T-cell (primary cell): ENCODE measurements at regions of chr22 and their contacts with region 1.

Region 1: DNA sequence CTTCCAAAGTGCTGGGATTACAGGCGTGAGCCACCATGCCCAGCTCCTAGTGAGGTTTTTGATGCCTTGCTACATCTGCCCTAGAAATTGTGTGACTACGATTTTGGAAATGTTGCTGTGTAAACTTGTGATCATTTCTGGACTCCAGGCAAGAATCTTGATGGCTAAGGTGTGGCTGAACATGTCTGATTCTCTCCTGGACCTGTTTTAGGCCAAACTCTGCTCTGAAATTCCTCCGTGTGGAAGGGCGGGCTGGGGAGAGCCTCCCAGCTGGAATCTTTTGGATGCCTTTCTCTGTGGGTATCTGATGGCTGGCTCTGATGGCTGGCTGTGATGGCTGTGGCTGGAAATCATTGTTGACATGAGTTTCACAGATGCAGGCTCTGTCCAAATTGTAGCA is 8.2 kb downstream of the PNPLA3 start:
- DNase-seq: no peak
- ATAC-seq: no peak
- H3K4me3 ChIP-seq: no peak overlapping the region
- H3K4me3 Mint-ChIP-seq: no peak overlapping the region
- H3K27ac ChIP-seq: no peak overlapping the region
- H3K27ac Mint-ChIP-seq: no peak overlapping the region
- H3K4me1 ChIP-seq: no peaks in the 10 kb centered on the region
- H3K4me1 Mint-ChIP-seq: no peaks in the 10 kb centered on the region
- H3K27me3 ChIP-seq: peaks cover 0 to 34% of the 10 kb centered on the region in 2 experiments
- H3K27me3 Mint-ChIP-seq: peaks cover 12 to 21% of the 10 kb centered on the region in 2 donors

Region 2: GRCh38 chr22:43921361-43921760 is 10.4 kb before region 1 on chr22:
- CTCF ChIA-PET with region 1: no interaction called
- POLR2A ChIA-PET with region 1: interaction called in 1 of 2 experiments, 10 read pairs
- DNase-seq: no peak
- ATAC-seq: no peak
- H3K4me3 ChIP-seq: no peak overlapping the region
- H3K4me3 Mint-ChIP-seq: no peak overlapping the region
- H3K27ac ChIP-seq: no peak overlapping the region
- H3K27ac Mint-ChIP-seq: no peak overlapping the region
- H3K4me1 ChIP-seq: peaks cover 0 to 16% of the 10 kb centered on the region in 2 experiments
- H3K4me1 Mint-ChIP-seq: peaks cover 7 to 8% (median 7%) of the 10 kb centered on the region in 3 donors
- H3K27me3 ChIP-seq: peaks cover 7 to 74% of the 10 kb centered on the region in 2 experiments
- H3K27me3 Mint-ChIP-seq: peaks cover 31 to 40% of the 10 kb centered on the region in 2 donors